Common myeloid progenitor, CD34-positive (primary cell): ENCODE measurements at regions of chr3 and their contacts with region 1.

Region 1: DNA sequence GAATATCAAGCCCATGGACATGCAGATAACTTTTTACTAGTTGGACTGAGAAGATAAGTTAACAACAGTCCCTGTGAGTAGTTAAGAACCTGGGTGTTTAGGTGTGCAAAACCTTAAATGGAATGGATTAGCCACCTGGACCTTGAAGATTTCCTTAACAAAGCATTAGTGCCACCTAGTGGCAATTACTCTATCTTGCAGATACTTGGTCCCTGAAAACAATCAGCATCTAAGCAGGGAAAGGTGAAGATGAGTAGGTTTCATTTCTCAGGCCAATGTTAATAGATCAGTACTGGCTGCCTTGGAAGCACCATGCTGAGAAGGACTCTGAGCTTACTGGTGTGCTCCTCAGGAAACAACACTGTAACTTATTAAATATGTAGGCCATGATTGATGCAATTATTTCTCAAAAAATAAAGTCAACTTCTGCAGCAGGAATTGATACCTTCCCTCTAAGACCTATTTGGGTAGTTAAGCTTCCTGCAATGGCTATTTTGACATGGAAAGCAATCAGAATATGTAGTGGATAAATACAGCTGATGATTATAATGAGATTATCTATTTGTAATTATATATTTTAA is 329.4 kb downstream of the TBC1D5 start:
- DNase-seq: peak; percentile 68 to 81 (median 74)
- H3K4me3 ChIP-seq: no peak overlapping the region
- H3K27ac ChIP-seq: no peak overlapping the region
- H3K4me1 ChIP-seq: no peaks in the 10 kb centered on the region
- H3K27me3 ChIP-seq: no peaks in the 10 kb centered on the region

Region 2: DNA sequence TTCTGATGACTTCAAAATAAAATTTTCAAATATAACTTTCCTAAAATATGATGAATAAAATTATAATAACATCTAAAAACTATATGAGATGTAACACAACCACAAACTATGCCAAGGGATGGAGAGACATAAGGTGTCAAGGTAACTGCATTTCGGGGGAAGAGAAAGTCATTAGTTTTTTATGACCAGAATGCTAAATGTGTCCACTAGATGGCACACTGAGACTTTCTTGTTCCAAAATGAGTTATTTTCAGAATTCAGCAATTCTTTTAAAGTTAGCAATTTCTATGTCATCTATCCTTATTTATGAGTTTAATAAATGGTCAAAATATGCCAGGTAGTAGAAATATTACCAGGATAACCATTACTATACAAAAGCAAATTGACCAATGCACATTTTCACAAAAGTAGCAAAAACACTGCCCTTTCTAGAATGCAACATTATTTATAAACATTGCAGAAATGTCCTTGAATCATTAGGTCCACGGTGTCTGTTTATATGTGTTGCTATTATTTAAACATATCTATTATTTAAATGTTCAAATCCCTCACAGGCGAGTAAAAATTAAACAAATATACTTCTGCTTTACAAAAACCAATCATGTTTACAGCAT is 154.1 kb before region 1 on chr3:
- CTCF ChIA-PET with region 1: interaction called, 30 read pairs
- POLR2A ChIA-PET with region 1: no interaction called
- DNase-seq: peak; percentile 54 to 76 (median 68)
- H3K4me3 ChIP-seq: no peak overlapping the region
- H3K27ac ChIP-seq: no peak overlapping the region
- H3K4me1 ChIP-seq: no peaks in the 10 kb centered on the region
- H3K27me3 ChIP-seq: no peaks in the 10 kb centered on the region

Region 3: GRCh38 chr3:17307482-17307881 is 105.6 kb before region 1 on chr3:
- CTCF ChIA-PET with region 1: interaction called, 21 read pairs
- POLR2A ChIA-PET with region 1: no interaction called
- DNase-seq: peak; percentile 21 to 35 (median 24)
- H3K4me3 ChIP-seq: peak overlapping the region in 1 of 7 experiments; percentile 14
- H3K27ac ChIP-seq: no peak overlapping the region
- H3K4me1 ChIP-seq: peaks cover 0 to 13% (median 1%) of the 10 kb centered on the region in 4 experiments
- H3K27me3 ChIP-seq: no peaks in the 10 kb centered on the region

Region 4: DNA sequence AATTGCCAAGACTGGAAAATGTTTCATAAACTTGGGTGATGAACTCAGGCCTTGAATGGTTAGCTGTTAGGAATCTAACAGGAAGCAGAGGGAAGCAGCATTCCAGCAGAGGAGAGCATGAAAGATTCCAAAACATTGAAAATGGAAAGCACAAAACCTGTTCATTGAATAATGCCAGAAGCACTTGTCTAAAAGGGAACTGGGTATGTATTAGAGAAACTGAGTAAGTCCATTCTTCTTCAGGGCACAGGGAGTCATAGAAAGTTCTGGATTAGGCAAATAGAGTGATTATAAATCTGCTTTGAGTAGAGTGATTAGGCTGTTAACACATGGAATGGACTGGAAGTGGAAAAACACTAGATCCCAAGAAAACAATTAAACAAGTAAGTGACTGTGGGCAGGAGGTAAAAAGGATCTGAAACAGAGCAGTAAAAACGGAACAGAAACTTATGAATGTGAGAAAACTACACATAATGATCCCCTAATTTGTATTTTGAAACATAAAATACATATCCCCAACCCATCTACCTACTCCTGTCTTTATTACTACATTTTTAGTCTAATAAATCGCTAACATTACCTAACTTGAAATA is 14.0 kb before region 1 on chr3:
- CTCF ChIA-PET with region 1: interaction called, 10 read pairs
- POLR2A ChIA-PET with region 1: no interaction called
- DNase-seq: no peak
- H3K4me3 ChIP-seq: no peak overlapping the region
- H3K27ac ChIP-seq: no peak overlapping the region
- H3K4me1 ChIP-seq: peaks cover 4 to 14% (median 11%) of the 10 kb centered on the region in 4 experiments
- H3K27me3 ChIP-seq: no peaks in the 10 kb centered on the region

Region 5: GRCh38 chr3:17423786-17424536 is 10.9 kb after region 1 on chr3:
- CTCF ChIA-PET with region 1: interaction called, 14 read pairs
- POLR2A ChIA-PET with region 1: no interaction called
- DNase-seq: no peak
- H3K4me3 ChIP-seq: no peak overlapping the region
- H3K27ac ChIP-seq: no peak overlapping the region
- H3K4me1 ChIP-seq: no peaks in the 10 kb centered on the region
- H3K27me3 ChIP-seq: no peaks in the 10 kb centered on the region